Naive thymus-derived CD4-positive, alpha-beta T cell (primary cell): ENCODE measurements at regions of chrX and their contacts with region 1.

Region 1: GRCh38 chrX:52574416-52575275 is 57.8 kb upstream of the XAGE1B start:
- DNase-seq: peak in 6 of 9 donors; percentile 5 to 40 (median 30)
- ATAC-seq: peak; percentile 57
- H3K4me3 ChIP-seq: no peak overlapping the region
- H3K4me3 Mint-ChIP-seq: no peak overlapping the region
- H3K27ac ChIP-seq: no peak overlapping the region
- H3K27ac Mint-ChIP-seq: no peak overlapping the region
- H3K4me1 ChIP-seq: no peaks in the 10 kb centered on the region
- H3K4me1 Mint-ChIP-seq: peaks cover 0 to 5% (median 0%) of the 10 kb centered on the region in 7 donors
- H3K27me3 ChIP-seq: no peaks in the 10 kb centered on the region
- H3K27me3 Mint-ChIP-seq: no peaks in the 10 kb centered on the region

Region 2: GRCh38 chrX:52556741-52557140 is 17.9 kb before region 1 on chrX:
- CTCF ChIA-PET with region 1: no interaction called
- POLR2A ChIA-PET with region 1: no interaction called
- intact Hi-C with region 1: no loop called
- DNase-seq: no peak
- ATAC-seq: no peak
- H3K4me3 ChIP-seq: no peak overlapping the region
- H3K4me3 Mint-ChIP-seq: no peak overlapping the region
- H3K27ac ChIP-seq: no peak overlapping the region
- H3K27ac Mint-ChIP-seq: peak overlapping the region in 1 of 9 donors; percentile 21
- H3K4me1 ChIP-seq: no peaks in the 10 kb centered on the region
- H3K4me1 Mint-ChIP-seq: no peaks in the 10 kb centered on the region
- H3K27me3 ChIP-seq: no peaks in the 10 kb centered on the region
- H3K27me3 Mint-ChIP-seq: no peaks in the 10 kb centered on the region

Region 3: DNA sequence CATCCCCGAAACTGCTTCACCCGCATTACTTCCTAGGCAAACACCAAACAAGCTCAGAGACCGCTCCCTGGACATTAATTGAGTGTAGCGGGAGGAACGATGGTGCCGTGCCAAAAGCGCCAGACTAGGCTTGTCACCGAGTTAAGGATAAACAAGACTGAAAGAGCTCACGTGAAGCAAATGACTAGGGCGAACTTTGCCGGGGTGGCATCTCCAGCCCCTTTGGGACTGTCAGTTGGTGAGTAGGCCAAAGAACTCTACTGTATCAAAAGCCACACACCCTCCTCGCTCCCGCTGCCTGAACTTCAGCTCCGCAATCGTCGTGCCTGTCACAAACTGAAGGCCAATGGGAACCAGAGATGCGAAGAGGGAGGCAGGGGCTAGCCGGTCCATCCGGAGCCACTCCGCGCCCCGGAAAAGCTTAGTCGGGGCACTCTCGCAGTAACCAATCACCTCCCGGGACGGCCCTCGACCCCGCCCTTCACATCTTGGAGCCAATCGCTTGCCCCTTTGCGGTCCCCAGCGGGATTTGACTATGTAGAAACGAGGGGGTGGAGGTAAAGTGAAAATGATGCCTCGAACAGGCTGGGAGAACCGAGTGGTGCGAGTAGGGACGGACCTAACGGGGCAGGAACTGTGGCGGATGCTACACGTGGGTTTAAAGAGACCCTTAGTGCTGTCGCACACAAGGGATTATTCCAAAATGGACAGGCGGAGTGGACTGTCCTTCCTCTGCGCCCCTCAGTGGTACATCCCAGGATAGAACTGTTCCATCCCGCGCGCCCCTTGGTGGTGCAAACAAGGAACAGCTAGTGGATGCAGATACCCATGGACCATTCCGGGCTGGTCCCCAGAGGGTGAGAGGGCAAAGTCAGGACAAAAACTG is 420.7 kb after region 1 on chrX:
- CTCF ChIA-PET with region 1: interaction called, 3 read pairs
- POLR2A ChIA-PET with region 1: no interaction called
- intact Hi-C with region 1: loop called in 1 of 2 experiments (anchors 1 kb)
- DNase-seq: peak; percentile 67 to 94 (median 91)
- ATAC-seq: peak; percentile 98
- H3K4me3 ChIP-seq: peak overlapping the region; percentile 92
- H3K4me3 Mint-ChIP-seq: peak overlapping the region; percentile 84 to 98 (median 94)
- H3K27ac ChIP-seq: peak overlapping the region; percentile 84
- H3K27ac Mint-ChIP-seq: peak overlapping the region; percentile 97 to 100 (median 99)
- H3K4me1 ChIP-seq: peaks cover 7 to 12% of the 10 kb centered on the region in 2 donors
- H3K4me1 Mint-ChIP-seq: peaks cover 11 to 25% (median 19%) of the 10 kb centered on the region in 7 donors
- H3K27me3 ChIP-seq: no peaks in the 10 kb centered on the region
- H3K27me3 Mint-ChIP-seq: peaks cover 0 to under 1% (median 0%) of the 10 kb centered on the region in 5 donors